ENCODE measurements at regions of chr1 and their contacts with region 1.

Region 1: GRCh38 chr1:22105611-22106207 is 37.2 kb downstream of the WNT4 start:
- DNase-seq: peak in 1 of 2 donors; percentile 72
- ATAC-seq: peak; percentile 61 to 69 (median 65)
- H3K4me3 ChIP-seq: no peak overlapping the region
- H3K4me3 Mint-ChIP-seq: peak overlapping the region; percentile 51
- H3K27ac ChIP-seq: peak overlapping the region; percentile 68
- H3K27ac Mint-ChIP-seq: peak overlapping the region; percentile 90
- H3K4me1 ChIP-seq: peaks cover 23% of the 10 kb centered on the region
- H3K4me1 Mint-ChIP-seq: peaks cover 77 to 79% of the 10 kb centered on the region in 2 donors
- H3K27me3 ChIP-seq: no peaks in the 10 kb centered on the region
- H3K27me3 Mint-ChIP-seq: no peaks in the 10 kb centered on the region
- CTCF ChIP-seq: peak; percentile 86

Region 2: GRCh38 chr1:21725748-21726392 is 379.8 kb before region 1 on chr1:
- intact Hi-C with region 1: no loop called
- DNase-seq: no peak
- ATAC-seq: no peak
- H3K4me3 ChIP-seq: no peak overlapping the region
- H3K4me3 Mint-ChIP-seq: no peak overlapping the region
- H3K27ac ChIP-seq: no peak overlapping the region
- H3K27ac Mint-ChIP-seq: peak overlapping the region in 1 of 2 donors; percentile 22
- H3K4me1 ChIP-seq: no peaks in the 10 kb centered on the region
- H3K4me1 Mint-ChIP-seq: peaks cover 5 to 11% of the 10 kb centered on the region in 2 donors
- H3K27me3 ChIP-seq: no peaks in the 10 kb centered on the region
- H3K27me3 Mint-ChIP-seq: no peaks in the 10 kb centered on the region
- CTCF ChIP-seq: no peak

Region 3: DNA sequence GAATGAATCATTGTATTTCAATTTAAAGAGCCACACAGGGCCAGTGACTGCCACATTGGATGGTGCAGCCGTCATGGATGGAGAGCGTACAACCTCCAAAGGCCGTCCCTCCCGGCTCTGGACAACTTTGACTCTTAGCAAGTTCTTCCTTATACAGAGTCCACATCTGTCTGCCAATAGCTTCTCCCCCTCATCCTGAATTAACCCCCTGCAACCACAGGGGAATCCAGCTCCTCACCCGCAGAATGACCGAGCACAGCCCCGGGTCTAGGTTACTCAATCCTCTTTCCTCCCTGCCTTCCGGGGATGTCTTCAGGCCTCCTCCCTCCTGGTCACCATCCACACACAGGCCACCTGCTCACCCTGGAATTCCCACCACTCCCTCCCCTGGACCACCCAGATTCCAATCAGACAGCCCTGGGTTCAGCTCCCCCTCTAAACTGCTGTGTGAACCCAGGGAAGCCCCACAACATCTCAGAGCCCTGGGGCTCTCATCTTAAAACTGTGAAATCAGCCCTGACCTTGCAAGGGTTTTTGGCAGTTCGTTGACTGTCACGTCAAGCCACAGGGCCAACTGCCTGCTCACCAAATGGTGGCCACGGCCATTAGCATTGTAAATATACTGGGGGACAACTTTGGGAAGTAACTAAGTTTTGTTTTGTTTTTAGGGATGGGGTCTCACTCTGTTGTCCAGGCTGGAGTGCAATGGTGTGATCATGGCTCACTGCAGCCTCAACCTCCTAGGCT is 222.9 kb before region 1 on chr1:
- intact Hi-C with region 1: no loop called
- DNase-seq: no peak
- ATAC-seq: no peak
- H3K4me3 ChIP-seq: no peak overlapping the region
- H3K4me3 Mint-ChIP-seq: no peak overlapping the region
- H3K27ac ChIP-seq: no peak overlapping the region
- H3K27ac Mint-ChIP-seq: no peak overlapping the region
- H3K4me1 ChIP-seq: no peaks in the 10 kb centered on the region
- H3K4me1 Mint-ChIP-seq: peaks cover 0 to 6% of the 10 kb centered on the region in 2 donors
- H3K27me3 ChIP-seq: no peaks in the 10 kb centered on the region
- H3K27me3 Mint-ChIP-seq: no peaks in the 10 kb centered on the region
- CTCF ChIP-seq: no peak

Region 4: DNA sequence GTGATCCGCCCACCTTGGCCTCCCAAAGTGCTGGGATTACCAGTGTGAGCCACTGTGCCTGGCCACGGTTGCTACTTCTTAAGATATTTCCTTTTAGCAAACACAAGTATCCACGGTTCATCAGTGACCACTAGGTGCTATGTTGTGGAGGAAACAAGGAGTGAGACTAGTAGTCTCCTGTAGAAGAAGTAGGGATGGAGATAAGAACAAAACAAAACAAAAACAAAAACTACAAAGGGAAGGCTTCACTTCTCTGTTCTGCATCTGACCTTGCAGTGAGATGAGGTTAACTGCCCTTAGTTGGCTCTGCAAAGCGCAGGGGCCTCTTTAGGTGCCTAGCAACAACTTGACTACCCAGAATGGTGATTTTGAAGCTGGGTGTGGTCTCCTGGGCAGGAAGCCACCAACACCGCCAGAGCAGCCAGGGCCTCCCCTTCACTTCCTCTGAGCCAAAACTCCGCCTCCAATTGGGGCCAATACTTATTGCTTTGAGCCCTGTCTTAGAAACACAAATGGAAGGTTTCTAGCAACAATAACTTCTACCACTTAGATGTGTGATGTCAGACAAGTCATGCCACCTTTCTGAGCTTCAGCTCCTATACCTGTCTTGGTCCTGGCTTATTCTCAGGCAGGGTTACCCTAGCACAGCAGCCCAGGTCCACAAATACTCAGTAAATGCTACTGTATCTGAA is 66.0 kb before region 1 on chr1:
- intact Hi-C with region 1: no loop called
- DNase-seq: peak; percentile 81 to 98
- ATAC-seq: peak; percentile 95 to 99 (median 98)
- H3K4me3 ChIP-seq: peak overlapping the region; percentile 19
- H3K4me3 Mint-ChIP-seq: peak overlapping the region; percentile 77
- H3K27ac ChIP-seq: peak overlapping the region; percentile 91
- H3K27ac Mint-ChIP-seq: peak overlapping the region; percentile 95 to 96
- H3K4me1 ChIP-seq: peaks cover 44% of the 10 kb centered on the region
- H3K4me1 Mint-ChIP-seq: peaks cover 40% of the 10 kb centered on the region in 2 donors
- H3K27me3 ChIP-seq: no peaks in the 10 kb centered on the region
- H3K27me3 Mint-ChIP-seq: no peaks in the 10 kb centered on the region
- CTCF ChIP-seq: no peak

Region 5: DNA sequence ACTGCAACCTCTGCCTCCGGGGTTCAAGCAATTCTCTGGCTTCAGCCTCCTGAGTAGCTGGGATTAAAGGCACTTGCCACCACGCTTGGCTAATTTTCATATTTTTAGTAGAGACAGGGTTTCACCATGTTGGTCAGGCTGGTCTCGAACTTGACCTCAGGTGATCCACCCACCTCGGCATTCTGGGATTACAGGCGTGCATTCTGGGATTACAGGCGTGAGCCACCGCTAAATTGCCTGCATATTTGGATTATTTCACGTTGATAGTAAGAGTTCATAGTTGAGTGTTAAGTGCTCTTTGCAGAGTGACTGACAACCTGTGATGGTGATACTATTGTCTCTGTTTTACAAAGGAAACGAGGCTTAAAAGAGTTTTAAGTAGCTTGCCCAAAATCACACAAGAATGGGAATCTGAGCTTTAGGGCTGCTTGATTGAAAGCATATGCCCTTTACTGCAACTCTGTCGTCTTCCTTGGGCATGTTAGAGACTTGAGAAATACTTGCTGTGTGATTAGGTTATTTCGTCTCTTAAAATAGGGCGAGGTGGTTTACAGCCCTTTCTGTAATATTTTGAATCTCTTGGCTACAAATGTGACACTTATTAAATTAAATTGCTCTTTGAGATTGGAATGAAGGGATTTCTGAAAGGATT is 40.8 kb before region 1 on chr1:
- intact Hi-C with region 1: loop called (anchors 5 kb)
- DNase-seq: no peak
- ATAC-seq: no peak
- H3K4me3 ChIP-seq: no peak overlapping the region
- H3K4me3 Mint-ChIP-seq: peak overlapping the region; percentile 89
- H3K27ac ChIP-seq: no peak overlapping the region
- H3K27ac Mint-ChIP-seq: peak overlapping the region; percentile 61 to 84
- H3K4me1 ChIP-seq: peaks cover 79% of the 10 kb centered on the region
- H3K4me1 Mint-ChIP-seq: peaks cover 86 to 87% of the 10 kb centered on the region in 2 donors
- H3K27me3 ChIP-seq: no peaks in the 10 kb centered on the region
- H3K27me3 Mint-ChIP-seq: no peaks in the 10 kb centered on the region
- CTCF ChIP-seq: no peak

Measured in natural killer cell (primary cell).